Posterior cingulate gyrus (tissue), 11 donors: ENCODE measurements at regions of chr17 and their contacts with region 1.

Region 1: DNA sequence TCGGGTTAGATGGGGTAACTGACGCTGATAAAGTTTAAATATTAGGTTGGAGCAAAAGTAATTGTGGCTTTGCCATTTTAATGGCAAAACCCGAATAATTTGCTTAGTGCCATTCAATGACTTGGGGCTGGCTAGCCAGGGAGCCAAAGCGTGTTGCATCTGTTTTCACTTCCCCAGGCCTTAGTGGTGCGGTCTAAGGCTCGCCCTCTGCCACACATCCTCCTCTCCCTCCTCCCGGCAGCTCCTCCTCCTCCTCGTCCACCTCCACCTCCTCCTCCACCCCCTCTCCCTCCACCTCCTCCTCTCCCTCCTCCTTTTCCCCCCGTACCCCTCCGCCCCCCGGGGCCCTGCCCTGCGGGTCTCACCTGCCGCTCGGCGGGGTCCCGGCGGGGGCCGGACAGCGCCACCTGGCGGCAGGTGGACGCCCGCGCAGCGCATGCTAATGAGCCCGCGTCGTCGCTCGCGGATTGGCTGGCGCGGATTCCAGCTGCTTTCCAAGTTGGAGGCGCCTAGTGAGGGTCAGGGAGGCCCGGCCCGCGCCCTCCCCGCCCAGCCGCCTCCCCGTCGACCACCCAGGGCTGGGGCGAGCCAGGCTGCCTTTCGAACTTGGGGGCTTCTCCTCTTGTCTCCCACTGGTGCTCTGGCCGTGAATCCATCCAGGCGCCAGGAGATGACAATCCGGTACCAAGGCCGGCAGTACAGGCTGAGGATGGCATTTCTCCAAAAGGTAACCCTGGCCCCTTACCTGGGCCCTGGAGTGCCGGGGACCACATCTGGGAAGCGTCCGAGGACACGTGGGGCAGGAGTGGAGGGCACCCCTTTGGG is 36.6 kb upstream of the RGS9 start:
- DNase-seq: peak; percentile 75 to 97 (median 84)

Region 2: GRCh38 chr17:65064452-65065019 is 36.0 kb before region 1 on chr17:
- intact Hi-C with region 1: loop called (anchors 5 kb)
- DNase-seq: no peak

Region 3: DNA sequence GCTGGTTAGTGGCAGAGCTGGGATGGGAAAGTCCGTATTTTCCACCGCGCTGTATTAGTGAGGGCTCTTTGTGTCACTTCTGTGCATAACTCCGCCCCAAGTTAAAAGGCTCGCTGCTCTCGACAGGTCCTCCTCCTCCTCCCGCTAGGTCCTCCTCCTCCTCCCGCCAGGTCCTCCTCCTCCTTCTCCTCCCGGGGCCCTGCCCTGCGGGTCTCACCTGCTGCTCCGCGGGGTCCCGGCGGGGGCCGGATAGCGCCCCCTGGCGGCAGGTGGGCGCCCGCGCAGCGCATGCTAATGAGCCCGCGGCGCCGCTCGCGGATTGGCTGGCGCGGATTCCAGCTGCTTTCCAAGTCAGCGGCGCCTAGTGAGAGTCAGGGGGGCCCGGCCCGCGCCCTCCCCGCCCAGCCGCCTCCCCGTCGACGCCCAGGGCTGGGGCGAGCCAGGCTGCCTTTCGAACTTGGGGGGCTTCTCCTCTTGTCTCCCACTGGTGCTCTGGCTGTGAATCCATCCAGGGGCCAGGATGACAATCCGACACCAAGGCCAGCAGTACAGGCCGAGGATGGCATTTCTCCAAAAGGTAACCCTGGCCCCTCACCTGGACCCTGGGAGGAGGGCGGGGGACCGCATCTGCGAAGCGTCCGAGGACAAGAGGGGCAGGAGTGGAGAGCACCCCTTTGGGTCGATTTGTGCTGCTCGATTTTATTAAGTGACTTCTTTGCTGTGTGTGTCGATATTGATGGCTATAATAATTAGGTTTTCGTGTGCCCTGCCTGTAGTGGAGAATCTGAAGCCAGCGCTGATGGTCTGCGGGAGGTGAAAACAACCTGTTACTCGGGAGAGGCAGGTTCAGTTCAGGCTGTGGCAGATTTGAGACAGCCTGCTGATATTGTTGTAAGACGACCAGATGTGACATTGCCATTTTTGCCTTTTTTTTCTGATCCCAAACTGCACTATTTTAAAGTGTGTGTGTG is 36.8 kb after region 1 on chr17 and contains the start of gene RGS9:
- intact Hi-C with region 1: loop called (anchors 5 kb)
- DNase-seq: peak; percentile 47 to 97 (median 78)